ENCODE measurements at regions of chr11 and their contacts with region 1.

Region 1: GRCh38 chr11:10413268-10413667 is 41.8 kb upstream of the AMPD3 start:
- DNase-seq: no peak
- ATAC-seq: peak; percentile 51

Region 2: GRCh38 chr11:10612216-10612862 is 199.1 kb after region 1 on chr11:
- intact Hi-C with region 1: no loop called
- DNase-seq: no peak
- ATAC-seq: no peak

Region 3: GRCh38 chr11:10735481-10736475 is 322.5 kb after region 1 on chr11:
- intact Hi-C with region 1: loop called (anchors 5 kb)
- DNase-seq: peak; percentile 97
- ATAC-seq: peak; percentile 99

Region 4: GRCh38 chr11:12137938-12138731 is 1724.9 kb after region 1 on chr11:
- intact Hi-C with region 1: no loop called
- DNase-seq: no peak
- ATAC-seq: no peak